ENCODE measurements at regions of chr15 and their contacts with region 1.

Region 1: DNA sequence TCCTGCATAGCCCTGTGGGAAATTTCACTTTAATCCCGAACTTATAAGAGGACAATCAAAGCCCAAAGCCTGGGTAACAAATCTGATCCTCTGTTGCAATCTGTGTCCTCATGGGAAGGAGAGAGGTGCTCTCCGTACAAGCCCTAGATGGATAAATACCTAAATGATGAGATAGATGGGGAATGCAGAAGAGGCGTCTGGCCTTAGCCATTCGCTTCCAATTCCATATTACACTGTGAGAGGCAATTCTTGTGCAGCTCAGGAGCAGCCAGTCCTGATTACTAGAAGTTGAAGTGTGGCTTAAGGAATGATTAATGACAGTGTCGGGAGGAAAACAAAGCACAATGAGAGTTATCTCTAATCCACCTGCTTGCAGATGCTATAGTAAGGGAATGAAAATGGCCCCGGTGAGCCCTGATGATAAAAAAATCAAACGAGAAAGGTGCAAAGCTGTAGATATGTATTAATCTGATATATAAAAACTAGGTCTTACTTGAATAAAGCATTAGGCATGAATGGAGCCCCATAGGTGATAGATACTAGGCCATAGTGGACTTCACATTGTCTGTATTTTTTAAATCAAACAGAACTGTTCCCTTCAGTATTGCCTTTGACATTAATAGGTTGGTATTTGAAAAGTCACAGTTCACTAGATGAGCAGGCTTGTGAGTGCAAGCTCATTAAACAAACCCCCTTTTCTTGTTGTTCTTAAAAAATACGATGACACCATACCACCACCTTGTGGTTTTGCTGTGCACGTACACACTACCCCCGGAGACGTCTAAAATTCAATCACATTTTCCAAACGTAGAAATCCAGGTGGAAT is 54.2 kb upstream of the TMCO5A start:
- DNase-seq: no peak
- H3K4me3 ChIP-seq: no peak overlapping the region
- H3K27ac ChIP-seq: no peak overlapping the region
- H3K4me1 ChIP-seq: no peaks in the 10 kb centered on the region
- H3K27me3 ChIP-seq: no peaks in the 10 kb centered on the region
- CTCF ChIP-seq: peak in 2 of 3 experiments; percentile 66 to 69; a peak in 3 of 4 replicates
- EP300 ChIP-seq: no peak
- POLR2A ChIP-seq: no peak
- RAD21 ChIP-seq: peak; percentile 88 to 89

Region 2: GRCh38 chr15:37682304-37682703 is 197.9 kb before region 1 on chr15:
- CTCF ChIA-PET with region 1: interaction called, 10 read pairs
- POLR2A ChIA-PET with region 1: no interaction called
- DNase-seq: no peak
- H3K4me3 ChIP-seq: no peak overlapping the region
- H3K27ac ChIP-seq: no peak overlapping the region
- H3K4me1 ChIP-seq: no peaks in the 10 kb centered on the region
- H3K27me3 ChIP-seq: no peaks in the 10 kb centered on the region
- CTCF ChIP-seq: peak in 2 of 3 experiments; percentile 47 to 65; a peak in 3 of 4 replicates
- EP300 ChIP-seq: no peak
- POLR2A ChIP-seq: no peak
- RAD21 ChIP-seq: peak; percentile 82 to 85

Region 3: DNA sequence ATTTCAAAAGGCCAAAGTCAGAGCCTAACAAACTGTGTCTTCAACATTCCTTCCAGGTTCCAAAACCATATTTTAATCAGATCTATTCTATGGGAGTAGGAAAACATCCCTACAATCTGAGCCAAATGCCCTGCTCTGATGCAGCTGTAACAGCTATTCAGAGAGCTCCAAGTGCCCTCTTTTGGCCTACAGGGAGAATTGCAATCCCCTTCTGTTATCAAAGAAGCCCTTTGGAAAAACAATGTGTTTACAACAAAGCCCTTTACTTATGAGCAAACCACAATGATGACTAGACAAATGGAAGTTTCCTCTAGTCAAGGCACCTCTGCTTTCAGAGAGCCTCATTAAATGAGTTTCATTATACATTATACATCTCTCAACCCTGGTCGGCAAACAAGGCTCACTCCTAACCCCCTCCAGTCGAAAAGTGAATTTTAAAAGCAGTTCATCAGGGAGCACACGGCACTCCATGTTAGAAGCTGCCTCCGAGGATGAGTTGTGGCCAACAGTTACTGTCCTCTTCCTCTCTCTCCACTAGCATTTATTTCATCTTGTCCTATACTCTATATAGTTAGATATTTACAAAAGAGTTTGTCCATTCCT is 11.6 kb after region 1 on chr15:
- CTCF ChIA-PET with region 1: interaction called, 44 read pairs
- POLR2A ChIA-PET with region 1: no interaction called
- DNase-seq: no peak
- H3K4me3 ChIP-seq: no peak overlapping the region
- H3K27ac ChIP-seq: no peak overlapping the region
- H3K4me1 ChIP-seq: no peaks in the 10 kb centered on the region
- H3K27me3 ChIP-seq: no peaks in the 10 kb centered on the region
- CTCF ChIP-seq: peak in 2 of 3 experiments; percentile 71 to 73; a peak in 3 of 4 replicates
- EP300 ChIP-seq: no peak
- POLR2A ChIP-seq: no peak
- RAD21 ChIP-seq: peak; percentile 81 to 86

Region 4: GRCh38 chr15:38117781-38118180 is 237.6 kb after region 1 on chr15:
- CTCF ChIA-PET with region 1: no interaction called
- POLR2A ChIA-PET with region 1: no interaction called
- DNase-seq: no peak
- H3K4me3 ChIP-seq: no peak overlapping the region
- H3K27ac ChIP-seq: no peak overlapping the region
- H3K4me1 ChIP-seq: peaks cover 0 to 3% (median 0%) of the 10 kb centered on the region in 4 experiments; a peak in 1 of 7 replicates
- H3K27me3 ChIP-seq: no peaks in the 10 kb centered on the region
- CTCF ChIP-seq: no peak
- EP300 ChIP-seq: no peak
- POLR2A ChIP-seq: no peak
- RAD21 ChIP-seq: no peak